ENCODE measurements at regions of chr6 and their contacts with region 1.

Region 1: DNA sequence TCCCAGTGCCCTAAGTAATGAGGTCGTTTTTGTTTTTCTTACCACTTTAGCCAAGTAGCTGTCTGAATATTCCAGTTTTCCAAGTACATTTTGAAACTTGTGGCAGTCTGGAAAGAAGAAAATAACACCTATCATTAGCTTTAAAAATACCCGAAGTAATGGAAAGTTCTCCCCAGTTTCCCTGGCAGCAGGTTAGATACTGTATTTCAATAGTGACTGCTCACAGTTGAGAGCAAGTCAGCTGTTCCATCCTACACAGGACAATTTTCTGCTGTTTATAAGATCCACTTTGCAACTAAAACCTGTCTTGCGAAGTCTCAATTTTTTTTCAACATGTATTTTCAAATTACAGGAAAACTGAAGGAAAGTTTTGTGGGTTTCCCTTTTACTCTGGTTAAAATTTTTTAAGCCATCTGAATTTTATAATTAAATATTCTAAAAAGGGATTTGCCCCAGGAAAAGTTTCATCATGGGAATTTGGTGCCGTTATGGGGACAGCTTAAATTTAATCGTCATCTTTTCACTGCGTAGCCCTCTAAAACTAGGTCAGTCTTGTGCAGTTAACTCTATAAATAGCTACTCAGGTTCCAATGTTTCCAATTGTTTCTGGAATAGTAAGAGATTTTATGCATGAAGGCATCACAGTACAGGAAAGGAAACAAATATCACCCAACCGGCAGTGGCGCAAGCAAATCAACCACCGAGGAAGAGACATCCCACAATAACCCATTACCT is 96.9 kb downstream of the MBOAT1 start:
- DNase-seq: no peak
- H3K27ac ChIP-seq: no peak overlapping the region
- CTCF ChIP-seq: no peak

Region 2: GRCh38 chr6:19824058-19824807 is 291.2 kb before region 1 on chr6:
- CTCF ChIA-PET with region 1: no interaction called
- POLR2A ChIA-PET with region 1: no interaction called
- DNase-seq: no peak
- H3K27ac ChIP-seq: no peak overlapping the region
- CTCF ChIP-seq: no peak

Region 3: GRCh38 chr6:20013066-20013861 is 102.1 kb before region 1 on chr6:
- CTCF ChIA-PET with region 1: no interaction called
- POLR2A ChIA-PET with region 1: no interaction called
- DNase-seq: no peak
- H3K27ac ChIP-seq: no peak overlapping the region
- CTCF ChIP-seq: no peak

Region 4: GRCh38 chr6:20126789-20127653 is 11.6 kb after region 1 on chr6:
- CTCF ChIA-PET with region 1: interaction called, 10 read pairs
- POLR2A ChIA-PET with region 1: no interaction called
- DNase-seq: peak; percentile 63
- H3K27ac ChIP-seq: no peak overlapping the region
- CTCF ChIP-seq: peak; percentile 89